GM12878 (cell line): ENCODE measurements at regions of chr12 and their contacts with region 1.

Region 1: GRCh38 chr12:129005416-129005815 is 152.1 kb downstream of the GLT1D1 start:
- DNase-seq: no peak
- ATAC-seq: no peak
- H3K4me3 ChIP-seq: no peak overlapping the region
- H3K27ac ChIP-seq: no peak overlapping the region
- H3K4me1 ChIP-seq: no peaks in the 10 kb centered on the region
- H3K27me3 ChIP-seq: no peaks in the 10 kb centered on the region
- CTCF ChIP-seq: no peak
- EP300 ChIP-seq: no peak
- POLR2A ChIP-seq: no peak
- RAD21 ChIP-seq: no peak

Region 2: GRCh38 chr12:128627659-128628058 is 377.8 kb before region 1 on chr12:
- CTCF ChIA-PET with region 1: no interaction called
- POLR2A ChIA-PET with region 1: interaction called, 10 read pairs
- RAD21 ChIA-PET with region 1: no interaction called
- SMC1A ChIA-PET with region 1: no interaction called
- in situ Hi-C with region 1: no loop called
- intact Hi-C with region 1: no loop called
- DNase-seq: no peak
- ATAC-seq: no peak
- H3K4me3 ChIP-seq: no peak overlapping the region
- H3K27ac ChIP-seq: no peak overlapping the region
- H3K4me1 ChIP-seq: no peaks in the 10 kb centered on the region
- H3K27me3 ChIP-seq: no peaks in the 10 kb centered on the region
- CTCF ChIP-seq: no peak
- EP300 ChIP-seq: no peak
- POLR2A ChIP-seq: no peak
- RAD21 ChIP-seq: no peak